CD4-positive, alpha-beta memory T cell (primary cell): ENCODE measurements at regions of chr9 and their contacts with region 1.

Region 1: GRCh38 chr9:96061293-96061987 is 185.9 kb downstream of the ERCC6L2 start:
- DNase-seq: peak; percentile 33 to 58 (median 47)
- H3K4me3 ChIP-seq: no peak overlapping the region
- H3K4me3 Mint-ChIP-seq: no peak overlapping the region
- H3K27ac ChIP-seq: no peak overlapping the region
- H3K27ac Mint-ChIP-seq: peak overlapping the region in 1 of 7 donors; percentile 31
- H3K4me1 ChIP-seq: peaks cover 4% of the 10 kb centered on the region
- H3K4me1 Mint-ChIP-seq: peaks cover 1 to 5% (median 5%) of the 10 kb centered on the region in 4 donors
- H3K27me3 ChIP-seq: no peaks in the 10 kb centered on the region
- H3K27me3 Mint-ChIP-seq: peaks cover 0 to 3% of the 10 kb centered on the region in 2 donors

Region 2: DNA sequence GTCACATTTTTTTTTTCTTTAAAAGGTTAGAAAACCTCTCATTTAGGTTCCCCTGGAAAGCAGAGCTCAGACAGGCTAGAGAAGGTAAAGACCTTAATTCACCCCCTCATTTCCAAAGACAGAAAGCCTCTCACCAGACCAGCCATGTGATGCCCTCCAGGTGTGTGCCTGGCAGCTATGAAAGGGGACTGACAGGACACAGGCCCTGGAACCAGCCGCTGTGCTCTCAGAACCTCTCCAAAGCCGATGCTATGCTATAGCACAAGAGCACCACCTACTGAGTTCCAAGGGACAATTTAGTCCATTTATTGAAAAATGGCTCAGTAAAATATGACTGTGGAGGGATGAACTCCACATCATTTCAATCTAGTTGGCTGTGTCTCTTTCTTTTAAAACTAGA is 792.8 kb before region 1 on chr9:
- CTCF ChIA-PET with region 1: no interaction called
- POLR2A ChIA-PET with region 1: no interaction called
- intact Hi-C with region 1: loop called (anchors 10 kb)
- DNase-seq: no peak
- H3K4me3 ChIP-seq: no peak overlapping the region
- H3K4me3 Mint-ChIP-seq: no peak overlapping the region
- H3K27ac ChIP-seq: no peak overlapping the region
- H3K27ac Mint-ChIP-seq: no peak overlapping the region
- H3K4me1 ChIP-seq: no peaks in the 10 kb centered on the region
- H3K4me1 Mint-ChIP-seq: peaks cover 0 to 9% (median 6%) of the 10 kb centered on the region in 4 donors
- H3K27me3 ChIP-seq: no peaks in the 10 kb centered on the region
- H3K27me3 Mint-ChIP-seq: no peaks in the 10 kb centered on the region

Region 3: GRCh38 chr9:96048104-96048955 is 13.1 kb before region 1 on chr9:
- CTCF ChIA-PET with region 1: no interaction called
- POLR2A ChIA-PET with region 1: no interaction called
- intact Hi-C with region 1: no loop called
- DNase-seq: no peak
- H3K4me3 ChIP-seq: no peak overlapping the region
- H3K4me3 Mint-ChIP-seq: no peak overlapping the region
- H3K27ac ChIP-seq: no peak overlapping the region
- H3K27ac Mint-ChIP-seq: no peak overlapping the region
- H3K4me1 ChIP-seq: no peaks in the 10 kb centered on the region
- H3K4me1 Mint-ChIP-seq: no peaks in the 10 kb centered on the region
- H3K27me3 ChIP-seq: no peaks in the 10 kb centered on the region
- H3K27me3 Mint-ChIP-seq: no peaks in the 10 kb centered on the region